Adrenal gland (tissue), 19 donors: ENCODE measurements at regions of chr7 and their contacts with region 1.

Region 1: DNA sequence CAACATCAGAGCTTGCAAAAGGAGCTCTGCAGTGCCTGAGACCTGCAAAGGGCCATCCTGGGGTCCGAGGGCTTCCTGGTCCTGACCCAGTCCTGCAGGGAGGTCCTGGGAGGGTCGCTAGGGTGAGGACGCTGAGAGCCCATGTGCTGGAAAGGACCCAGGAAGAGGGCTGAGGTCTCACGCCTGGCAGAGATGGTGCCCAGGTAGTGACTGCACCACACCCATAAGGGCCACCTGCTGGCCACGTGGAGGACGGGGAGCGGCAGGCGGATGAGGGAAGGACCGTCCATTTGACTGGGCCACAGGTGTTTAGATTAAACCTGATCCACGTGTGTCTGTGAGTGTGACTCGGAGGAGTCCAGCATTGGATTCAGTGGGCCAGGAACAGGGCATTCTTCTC is 392.8 kb downstream of the DNAJB6 start:
- DNase-seq: no peak
- H3K4me3 ChIP-seq: no peak overlapping the region
- H3K27ac ChIP-seq: no peak overlapping the region
- H3K4me1 ChIP-seq: no peaks in the 10 kb centered on the region
- H3K27me3 ChIP-seq: no peaks in the 10 kb centered on the region
- CTCF ChIP-seq: no peak
- POLR2A ChIP-seq: no peak

Region 2: DNA sequence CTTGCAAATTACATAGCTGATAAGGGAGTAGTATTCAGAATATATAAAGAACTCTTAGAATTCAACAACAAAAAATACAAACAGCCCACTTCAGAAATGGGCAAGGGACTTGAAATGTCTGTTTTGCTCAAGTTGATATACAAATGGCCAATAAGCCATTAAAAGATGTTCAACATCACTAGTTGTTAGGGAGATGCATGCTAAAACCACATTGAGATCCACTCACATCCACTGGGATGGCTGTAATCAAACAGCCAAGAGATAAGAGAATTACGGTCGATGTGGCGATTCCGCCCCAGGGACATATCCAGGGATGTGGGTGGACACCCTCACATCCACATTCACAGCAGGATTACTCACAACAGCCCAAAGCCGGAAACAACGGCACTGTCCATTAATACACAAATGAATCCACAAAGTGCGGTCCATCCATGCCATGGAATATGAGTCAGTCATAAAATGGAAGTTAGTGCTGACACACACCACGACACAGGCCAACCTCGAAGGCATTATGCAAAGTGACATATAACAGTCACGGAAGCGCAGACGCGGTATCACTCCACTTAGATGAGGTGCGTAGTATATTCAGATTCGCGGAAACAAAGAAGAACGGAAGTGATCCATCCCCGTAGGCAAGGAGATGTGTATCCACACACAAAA is 164.9 kb before region 1 on chr7:
- intact Hi-C with region 1: no loop called
- DNase-seq: no peak
- H3K4me3 ChIP-seq: no peak overlapping the region
- H3K27ac ChIP-seq: no peak overlapping the region
- H3K4me1 ChIP-seq: no peaks in the 10 kb centered on the region
- H3K27me3 ChIP-seq: no peaks in the 10 kb centered on the region
- CTCF ChIP-seq: no peak
- POLR2A ChIP-seq: no peak

Region 3: GRCh38 chr7:157784979-157785441 is 55.4 kb after region 1 on chr7:
- intact Hi-C with region 1: loop called in 1 of 2 experiments (anchors 10 kb)
- DNase-seq: no peak
- H3K4me3 ChIP-seq: no peak overlapping the region
- H3K27ac ChIP-seq: no peak overlapping the region
- H3K4me1 ChIP-seq: no peaks in the 10 kb centered on the region
- H3K27me3 ChIP-seq: no peaks in the 10 kb centered on the region
- CTCF ChIP-seq: no peak
- POLR2A ChIP-seq: no peak